ENCODE measurements at regions of chr2 and their contacts with region 1.

Region 1: DNA sequence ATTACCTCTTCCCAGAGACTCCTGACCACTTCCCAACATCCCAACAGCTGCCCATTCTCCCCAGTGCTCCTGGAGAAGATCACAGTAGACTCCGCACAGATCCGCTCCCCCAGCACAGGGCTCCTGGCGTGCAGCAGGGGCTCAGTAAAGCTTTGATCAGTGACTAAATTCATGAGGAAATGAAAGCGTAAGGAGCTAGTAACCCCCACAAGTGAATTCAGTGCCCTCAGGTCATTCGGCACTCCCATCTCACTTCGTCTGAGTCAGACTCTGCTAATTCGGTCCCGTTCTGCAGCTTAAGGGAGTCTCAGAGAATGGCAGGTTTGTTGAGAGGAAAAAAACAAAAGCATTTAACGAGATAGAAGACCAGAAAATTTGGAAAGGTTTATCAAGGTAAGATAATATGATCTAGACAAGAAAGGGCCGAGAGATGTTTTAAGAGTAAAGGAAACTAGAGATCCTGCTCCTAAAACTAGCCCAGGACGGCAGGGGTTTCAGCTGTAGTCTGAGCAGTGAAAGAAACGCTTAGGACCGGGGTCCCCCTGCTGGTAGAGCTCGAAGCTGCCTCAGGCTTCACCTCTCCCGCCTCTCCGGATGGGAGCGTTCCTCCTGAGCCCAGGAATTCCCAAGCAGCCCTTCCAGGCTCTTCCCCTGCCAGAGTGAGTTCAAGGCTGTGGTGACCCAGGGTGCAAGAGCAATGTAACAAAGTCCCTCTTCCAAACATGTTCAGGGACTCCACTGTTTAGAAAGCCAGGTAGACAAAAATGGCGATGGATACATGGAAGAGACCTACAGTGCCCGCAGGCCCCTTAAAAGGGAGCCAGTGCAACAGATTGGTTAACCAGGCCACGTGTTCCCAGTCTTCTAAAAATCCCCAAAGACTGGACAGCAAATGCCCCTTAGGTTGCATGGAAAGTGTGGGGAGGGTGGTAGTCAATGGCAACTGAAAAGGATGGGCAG is 127.3 kb downstream of the DNER start:
- DNase-seq: peak; percentile 87
- ATAC-seq: peak; percentile 97

Region 2: GRCh38 chr2:228681426-228681825 is 905.6 kb before region 1 on chr2:
- intact Hi-C with region 1: loop called (anchors 5 kb)
- DNase-seq: no peak
- ATAC-seq: peak; percentile 54

Region 3: DNA sequence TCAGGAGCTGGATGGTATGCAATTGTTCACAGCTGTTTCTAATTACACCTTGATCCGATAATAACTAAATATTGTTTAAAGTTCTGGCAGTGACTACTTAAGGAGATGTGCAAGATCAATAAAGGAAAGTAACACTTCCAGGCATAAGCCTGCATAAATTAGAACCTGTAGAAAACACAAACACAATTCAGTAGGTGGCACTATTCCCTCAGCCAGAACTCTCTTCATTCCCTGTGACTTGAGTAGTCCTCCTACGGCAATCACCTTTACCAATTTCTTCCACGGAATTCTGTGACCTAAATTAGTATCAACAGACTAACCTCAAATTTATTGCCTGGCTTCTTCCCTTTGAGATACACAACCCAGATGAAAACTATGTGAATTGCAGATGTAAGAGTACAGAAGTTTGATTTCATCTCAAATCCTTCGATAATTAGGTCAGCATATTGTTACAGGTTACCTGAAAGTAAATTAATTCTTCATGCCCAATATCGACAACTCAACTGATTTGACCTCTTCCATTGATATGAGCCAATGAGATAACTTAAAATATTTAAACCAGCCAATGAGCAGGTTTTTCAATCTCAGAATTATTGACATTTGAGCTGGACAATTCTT is 453.8 kb before region 1 on chr2:
- intact Hi-C with region 1: loop called (anchors 2 kb)
- DNase-seq: no peak
- ATAC-seq: peak; percentile 52

Region 4: GRCh38 chr2:229350126-229350812 is 236.8 kb before region 1 on chr2:
- intact Hi-C with region 1: loop called (anchors 10 kb)
- DNase-seq: no peak
- ATAC-seq: no peak

Region 5: DNA sequence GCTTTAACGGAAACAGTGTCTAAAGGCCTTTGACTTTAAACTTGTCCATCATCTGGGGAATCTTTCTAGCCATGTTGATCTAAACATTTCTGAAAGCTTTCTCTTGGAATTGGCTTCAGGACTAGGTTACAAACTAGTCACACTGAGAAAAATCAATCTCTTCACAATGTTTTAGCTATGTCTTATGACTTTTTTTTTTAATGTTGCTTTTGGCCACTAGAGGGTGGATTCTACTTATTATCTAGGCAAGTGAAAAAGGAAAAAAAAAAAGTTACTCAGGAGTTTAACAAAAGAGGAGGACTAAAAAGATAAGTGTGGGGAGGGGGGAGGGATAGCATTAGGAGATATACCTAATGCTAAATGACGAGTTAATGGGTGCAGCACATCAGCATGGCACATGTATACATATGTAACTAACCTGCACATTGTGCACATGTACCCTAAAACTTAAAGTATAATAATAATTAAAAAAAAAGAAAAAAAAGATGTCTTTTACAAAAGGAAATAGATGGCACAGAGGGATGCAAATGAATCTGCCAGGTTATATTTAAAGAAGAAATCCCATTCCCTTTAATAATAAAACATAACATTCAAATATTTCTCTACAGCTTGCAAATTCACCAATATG is 155.6 kb before region 1 on chr2:
- intact Hi-C with region 1: loop called (anchors 2 kb)
- DNase-seq: no peak
- ATAC-seq: no peak